Right ventricle myocardium inferior (tissue), 1 donor: ENCODE measurements at regions of chr7 and their contacts with region 1.

Region 1: GRCh38 chr7:35415411-35415822 is 161.5 kb upstream of the TBX20 start:
- DNase-seq: peak; percentile 89
- ATAC-seq: peak; percentile 95

Region 2: DNA sequence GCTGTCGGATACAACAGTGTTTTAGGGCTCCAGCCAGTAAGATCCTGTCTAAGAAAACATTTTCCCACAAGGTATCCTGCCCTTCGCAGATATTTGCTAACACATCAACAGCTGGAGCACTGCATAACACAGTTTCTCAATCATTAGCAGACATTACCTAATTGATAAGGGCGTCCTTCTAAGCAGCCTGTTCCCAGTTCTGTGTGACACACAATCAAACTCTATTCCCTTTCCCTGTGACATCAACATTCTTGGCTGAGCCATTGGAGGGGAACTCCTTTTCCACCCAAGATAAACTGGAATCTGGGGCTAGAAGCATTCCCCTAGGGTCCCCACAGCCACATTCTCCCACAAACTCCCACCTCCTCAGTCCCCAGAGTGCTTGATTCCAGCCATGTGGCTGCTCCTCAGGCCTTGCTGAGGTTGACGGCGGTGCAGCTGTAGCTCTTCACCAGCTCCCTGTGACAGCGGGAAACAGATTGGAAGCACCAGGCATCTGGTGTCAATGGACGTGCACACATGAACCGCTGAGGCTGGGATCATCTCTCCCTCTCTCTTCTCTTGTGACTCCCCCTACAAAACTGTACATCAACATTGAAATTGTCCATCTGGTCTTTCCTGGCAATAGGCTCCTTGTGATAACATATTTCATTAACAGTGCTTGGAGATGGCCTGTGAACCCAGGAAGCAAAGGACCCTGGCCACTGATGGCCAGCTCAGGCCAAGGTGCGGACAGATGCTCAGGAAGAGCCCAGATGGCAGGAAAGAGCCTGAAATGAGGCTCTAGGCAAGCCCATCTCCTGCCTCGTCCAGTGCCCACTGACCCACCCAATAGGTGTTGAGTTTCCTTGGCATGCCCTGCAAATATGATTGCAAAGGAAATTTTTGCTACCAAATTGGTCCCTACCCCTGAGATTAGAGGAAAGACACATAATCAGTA is 30.4 kb before region 1 on chr7:
- intact Hi-C with region 1: loop called (anchors 1 kb)
- DNase-seq: peak; percentile 85
- ATAC-seq: peak; percentile 91